ENCODE measurements at regions of chrX and their contacts with region 1.

Region 1: GRCh38 chrX:21798677-21799219 is 40.7 kb upstream of the MBTPS2 start:
- DNase-seq: peak; percentile 66
- ATAC-seq: peak; percentile 90
- H3K4me3 ChIP-seq: no peak overlapping the region
- H3K27ac ChIP-seq: no peak overlapping the region
- H3K4me1 ChIP-seq: peaks cover 40% of the 10 kb centered on the region
- H3K27me3 ChIP-seq: no peaks in the 10 kb centered on the region
- CTCF ChIP-seq: no peak
- EP300 ChIP-seq: peak in 1 of 2 experiments; percentile 4; a peak in 1 of 4 replicates
- POLR2A ChIP-seq: no peak
- RAD21 ChIP-seq: no peak

Region 2: DNA sequence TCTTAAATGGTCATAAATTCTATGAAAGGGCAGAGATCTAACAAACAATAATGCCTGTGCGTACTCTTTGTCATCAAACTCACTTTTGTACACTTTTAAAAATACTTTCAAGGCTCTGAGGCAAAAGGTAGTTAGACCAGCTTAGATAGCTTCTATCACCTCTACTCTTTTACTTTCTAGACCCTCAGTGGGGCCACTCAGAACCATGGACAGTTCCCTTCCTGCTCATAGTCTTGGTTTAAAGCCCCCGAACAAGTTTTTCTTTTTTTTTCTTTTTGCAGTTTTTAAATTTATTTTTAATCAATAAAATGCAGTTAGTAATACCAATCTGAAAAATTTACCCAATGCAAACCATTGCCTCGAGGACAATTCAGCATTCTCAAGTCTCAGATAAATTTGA is 885.0 kb before region 1 on chrX:
- CTCF ChIA-PET with region 1: no interaction called
- POLR2A ChIA-PET with region 1: no interaction called
- in situ Hi-C with region 1: no loop called
- intact Hi-C with region 1: no loop called
- DNase-seq: no peak
- ATAC-seq: no peak
- H3K4me3 ChIP-seq: no peak overlapping the region
- H3K27ac ChIP-seq: no peak overlapping the region
- H3K4me1 ChIP-seq: no peaks in the 10 kb centered on the region
- H3K27me3 ChIP-seq: no peaks in the 10 kb centered on the region
- CTCF ChIP-seq: no peak
- EP300 ChIP-seq: no peak
- POLR2A ChIP-seq: no peak
- RAD21 ChIP-seq: no peak

Region 3: DNA sequence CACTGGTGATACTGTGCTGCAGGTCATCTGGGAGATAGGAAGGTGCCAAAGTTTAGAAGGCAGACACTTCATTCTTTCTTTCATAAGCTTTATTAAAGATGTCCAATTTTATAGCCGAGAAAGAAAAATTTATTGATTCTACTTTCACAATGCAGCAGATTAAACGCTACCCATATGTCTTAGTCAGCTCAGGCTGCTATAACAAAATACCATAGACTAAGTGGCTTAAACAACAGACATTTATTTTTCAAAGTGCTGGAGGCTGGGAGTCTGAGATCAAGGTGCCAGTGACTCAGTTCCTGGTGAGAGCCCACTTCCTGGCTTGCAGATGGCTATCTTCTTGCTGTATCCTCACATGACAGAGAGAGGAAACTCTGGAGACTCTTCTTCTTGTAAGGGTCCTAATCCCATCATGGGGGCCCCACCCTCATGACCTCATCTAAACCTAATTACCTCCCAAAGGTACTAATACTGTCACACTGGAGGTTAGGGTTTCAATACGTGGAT is 107.2 kb before region 1 on chrX:
- CTCF ChIA-PET with region 1: no interaction called
- POLR2A ChIA-PET with region 1: no interaction called
- in situ Hi-C with region 1: no loop called
- intact Hi-C with region 1: no loop called
- DNase-seq: no peak
- ATAC-seq: no peak
- H3K4me3 ChIP-seq: no peak overlapping the region
- H3K27ac ChIP-seq: no peak overlapping the region
- H3K4me1 ChIP-seq: no peaks in the 10 kb centered on the region
- H3K27me3 ChIP-seq: no peaks in the 10 kb centered on the region
- CTCF ChIP-seq: no peak
- EP300 ChIP-seq: no peak
- POLR2A ChIP-seq: no peak
- RAD21 ChIP-seq: no peak

Region 4: DNA sequence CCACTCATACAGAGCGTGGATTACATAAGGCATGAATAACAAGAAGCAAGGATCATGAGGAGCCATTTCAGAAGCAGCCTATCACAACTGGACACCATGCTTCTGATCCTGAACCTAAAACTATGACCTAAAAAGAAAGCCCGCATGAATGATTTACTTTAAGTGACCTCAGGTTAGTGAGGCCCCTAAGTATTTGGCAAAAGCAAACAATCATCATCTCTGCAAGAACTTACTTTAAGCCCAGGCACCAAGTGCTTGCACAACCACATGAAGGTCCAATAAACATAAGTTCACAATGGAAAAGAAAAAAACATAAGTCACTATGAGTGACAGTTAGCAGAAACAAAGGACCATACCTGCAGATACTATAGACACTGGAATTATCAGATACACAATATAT is 32.7 kb after region 1 on chrX:
- CTCF ChIA-PET with region 1: no interaction called
- POLR2A ChIA-PET with region 1: no interaction called
- in situ Hi-C with region 1: no loop called
- intact Hi-C with region 1: loop called (anchors 5 kb)
- DNase-seq: peak; percentile 88
- ATAC-seq: peak; percentile 98
- H3K4me3 ChIP-seq: no peak overlapping the region
- H3K27ac ChIP-seq: peak overlapping the region; percentile 67
- H3K4me1 ChIP-seq: peaks cover 19% of the 10 kb centered on the region
- H3K27me3 ChIP-seq: no peaks in the 10 kb centered on the region
- CTCF ChIP-seq: no peak
- EP300 ChIP-seq: peak in 1 of 2 experiments; percentile 88; a peak in 2 of 4 replicates
- POLR2A ChIP-seq: no peak
- RAD21 ChIP-seq: no peak